Psoas muscle (tissue), 8 donors: ENCODE measurements at regions of chr18 and their contacts with region 1.

Region 1: GRCh38 chr18:77000527-77000926 is 132.1 kb downstream of the MBP start:
- DNase-seq: peak; percentile 58 to 75
- ATAC-seq: peak; percentile 34 to 74 (median 61)
- H3K4me3 ChIP-seq: peak overlapping the region; percentile 43
- H3K27ac ChIP-seq: no peak overlapping the region
- H3K4me1 ChIP-seq: peaks cover 4% of the 10 kb centered on the region
- H3K27me3 ChIP-seq: no peaks in the 10 kb centered on the region
- CTCF ChIP-seq: peak; percentile 99

Region 2: GRCh38 chr18:76970770-76971559 is 29.6 kb before region 1 on chr18:
- intact Hi-C with region 1: no loop called
- DNase-seq: no peak
- ATAC-seq: no peak
- H3K4me3 ChIP-seq: no peak overlapping the region
- H3K27ac ChIP-seq: no peak overlapping the region
- H3K4me1 ChIP-seq: no peaks in the 10 kb centered on the region
- H3K27me3 ChIP-seq: no peaks in the 10 kb centered on the region
- CTCF ChIP-seq: no peak

Region 3: GRCh38 chr18:77054606-77055428 is 54.3 kb after region 1 on chr18:
- intact Hi-C with region 1: loop called (anchors 1 to 2 kb)
- DNase-seq: peak; percentile 82 to 91
- ATAC-seq: peak; percentile 80 to 84 (median 82)
- H3K4me3 ChIP-seq: peak overlapping the region; percentile 27
- H3K27ac ChIP-seq: peak overlapping the region; percentile 83
- H3K4me1 ChIP-seq: peaks cover 63% of the 10 kb centered on the region
- H3K27me3 ChIP-seq: no peaks in the 10 kb centered on the region
- CTCF ChIP-seq: peak; percentile 67